ENCODE measurements at regions of chr1 and their contacts with region 1.

Region 1: DNA sequence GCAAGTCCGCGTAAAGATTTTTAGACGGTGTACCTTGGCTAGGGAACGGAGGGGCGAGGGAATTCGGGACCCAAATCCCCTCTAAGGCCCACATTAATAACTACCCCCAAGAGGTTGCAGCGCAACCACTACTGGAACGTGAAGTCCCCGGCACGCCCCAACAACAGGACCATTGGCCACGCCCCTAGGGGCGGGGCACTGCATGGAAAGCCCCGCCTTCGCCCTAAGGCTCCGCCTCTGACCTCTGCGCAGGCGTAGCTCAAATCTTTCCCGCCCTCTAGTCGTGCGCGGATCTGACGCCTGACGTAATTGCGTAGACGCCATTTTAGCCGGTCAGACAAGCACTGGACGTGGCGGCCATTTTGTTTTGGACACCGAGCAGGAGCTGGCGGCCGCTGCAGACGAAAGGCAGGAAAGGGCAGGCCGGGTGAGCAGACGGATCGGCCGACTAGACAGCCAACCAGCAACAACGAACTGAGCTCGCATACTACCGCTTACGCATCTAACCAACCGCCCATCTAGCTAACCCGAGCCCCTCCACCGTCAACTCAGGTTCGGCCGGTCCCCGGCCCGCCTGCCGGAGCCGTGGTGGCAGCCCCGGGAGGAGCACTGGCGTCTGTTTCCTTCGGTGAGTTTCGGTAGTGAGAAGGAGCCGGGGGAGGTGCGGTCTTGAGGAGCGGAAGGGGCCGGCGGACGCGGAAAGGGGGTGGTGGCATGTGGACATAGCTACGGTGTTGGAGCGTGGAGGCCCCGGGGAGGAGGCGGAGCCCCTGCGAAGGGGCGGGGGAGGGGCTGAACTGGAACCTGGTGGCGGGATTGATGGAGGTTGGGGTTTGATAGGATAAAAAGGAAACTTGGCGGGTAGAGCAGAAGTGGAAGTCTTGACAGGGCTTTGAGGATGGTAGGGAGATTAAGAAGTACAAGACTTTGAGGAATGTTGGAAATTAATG is at the start of gene CHTOP:
- DNase-seq: peak; percentile 94 to 98 (median 95)
- ATAC-seq: peak; percentile 94
- H3K4me3 ChIP-seq: peak within 1 kb of the TSS; percentile 89
- H3K27ac ChIP-seq: peak within 1 kb of the TSS; percentile 98
- H3K4me1 ChIP-seq: peaks cover 17 to 20% of the 10 kb centered on the region in 2 experiments
- H3K27me3 ChIP-seq: no peaks in the 10 kb centered on the region
- CTCF ChIP-seq: no peak; a peak in 1 of 6 replicates
- EP300 ChIP-seq: peak; percentile 8; the same call in 1 of the 2 replicates
- POLR2A ChIP-seq: peak; percentile 98
- RAD21 ChIP-seq: no peak
- polyA plus RNA-seq, gene CHTOP: 10.2 to 10.3 TPM

Region 2: GRCh38 chr1:153532769-153533599 is 101.0 kb before region 1 on chr1:
- CTCF ChIA-PET with region 1: no interaction called
- POLR2A ChIA-PET with region 1: no interaction called
- in situ Hi-C with region 1: no loop called
- intact Hi-C with region 1: loop called (anchors 5 kb)
- DNase-seq: peak; percentile 87 to 92 (median 89)
- ATAC-seq: peak; percentile 94
- H3K4me3 ChIP-seq: no peak overlapping the region
- H3K27ac ChIP-seq: peak overlapping the region; percentile 44; the same call in 2 of the 3 replicates
- H3K4me1 ChIP-seq: peaks cover 38 to 45% of the 10 kb centered on the region in 2 experiments
- H3K27me3 ChIP-seq: no peaks in the 10 kb centered on the region
- CTCF ChIP-seq: peak; percentile 92 to 96 (median 94)
- EP300 ChIP-seq: no peak
- POLR2A ChIP-seq: no peak
- RAD21 ChIP-seq: peak; percentile 90 to 91

Region 3: DNA sequence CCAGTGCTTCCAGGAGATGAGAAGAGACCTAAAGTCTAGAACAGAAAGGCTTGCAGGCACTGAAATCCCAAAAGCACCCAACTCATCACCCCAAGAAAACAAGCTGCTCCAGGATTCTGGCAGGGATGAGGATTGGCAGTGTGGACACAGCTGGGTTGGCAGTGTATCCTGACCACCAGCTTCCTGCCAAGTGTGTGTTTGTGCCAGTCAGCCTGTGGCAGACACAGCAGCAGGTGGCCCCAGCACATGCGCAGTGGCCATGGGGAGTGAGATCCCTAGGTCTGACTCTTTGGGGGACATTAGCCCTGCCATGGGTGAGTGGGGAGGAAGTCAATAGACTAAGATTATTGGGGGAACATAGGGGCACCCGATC is 15.9 kb after region 1 on chr1:
- CTCF ChIA-PET with region 1: no interaction called
- POLR2A ChIA-PET with region 1: interaction called, 205 read pairs
- in situ Hi-C with region 1: no loop called
- intact Hi-C with region 1: no loop called
- DNase-seq: no peak
- ATAC-seq: no peak
- H3K4me3 ChIP-seq: no peak overlapping the region
- H3K27ac ChIP-seq: no peak overlapping the region
- H3K4me1 ChIP-seq: peaks cover 14% of the 10 kb centered on the region in 2 experiments
- H3K27me3 ChIP-seq: no peaks in the 10 kb centered on the region
- CTCF ChIP-seq: no peak
- EP300 ChIP-seq: no peak
- POLR2A ChIP-seq: no peak
- RAD21 ChIP-seq: no peak

Region 4: DNA sequence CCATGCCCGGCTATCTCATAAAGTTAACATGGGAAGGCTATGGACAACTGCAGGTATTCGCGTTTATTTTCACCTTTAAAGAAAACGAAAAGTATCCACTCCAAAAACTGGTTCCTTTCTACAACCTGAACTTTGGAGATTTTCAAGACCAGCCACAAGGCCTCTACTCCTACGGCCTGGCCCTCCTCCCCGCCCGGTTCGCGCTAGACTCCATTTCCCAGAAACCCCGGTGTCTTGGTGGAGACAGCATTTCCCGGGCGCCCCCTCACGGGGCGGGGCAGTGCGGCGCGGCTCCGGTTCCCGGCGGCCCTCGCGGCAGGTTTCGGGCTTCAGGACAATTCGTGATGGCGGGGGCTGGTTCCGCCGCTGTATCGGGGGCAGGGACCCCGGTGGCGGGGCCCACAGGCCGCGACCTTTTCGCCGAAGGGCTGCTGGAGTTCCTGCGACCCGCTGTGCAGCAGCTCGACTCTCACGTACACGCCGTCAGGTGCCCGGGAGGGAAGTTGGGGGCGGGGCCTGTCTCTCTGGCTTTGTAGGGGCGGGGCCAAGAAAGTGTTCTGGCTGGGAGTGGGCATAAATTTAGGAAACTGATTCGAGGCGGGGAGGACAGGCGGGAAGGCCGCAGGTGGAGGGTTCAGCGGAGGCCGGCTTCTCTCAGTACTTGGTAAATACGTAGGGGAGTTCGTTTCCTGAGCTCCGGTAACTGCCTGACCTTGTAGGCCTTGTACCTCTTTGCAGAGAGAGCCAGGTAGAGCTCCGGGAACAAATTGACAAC is 24.6 kb after region 1 on chr1 and contains the start of gene SNAPIN:
- CTCF ChIA-PET with region 1: no interaction called
- POLR2A ChIA-PET with region 1: interaction called, 205 read pairs
- in situ Hi-C with region 1: no loop called
- intact Hi-C with region 1: no loop called
- DNase-seq: peak; percentile 87 to 95 (median 90)
- ATAC-seq: peak; percentile 97
- H3K4me3 ChIP-seq: peak within 1 kb of the TSS; percentile 98
- H3K27ac ChIP-seq: peak within 1 kb of the TSS; percentile 86
- H3K4me1 ChIP-seq: peaks cover 3 to 16% of the 10 kb centered on the region in 2 experiments; a peak in 4 of 5 replicates
- H3K27me3 ChIP-seq: no peaks in the 10 kb centered on the region
- CTCF ChIP-seq: 0 out of 6 replicates have a peak, but pooled peaks of 2 of the 3 experiments have one; percentile 14 to 25
- EP300 ChIP-seq: no peak
- POLR2A ChIP-seq: peak; percentile 87
- RAD21 ChIP-seq: 0 out of 4 replicates have a peak, but pooled peaks of 1 of the 2 experiments have one; percentile 6
- polyA plus RNA-seq, gene SNAPIN: 11.2 to 15.8 TPM

Region 5: GRCh38 chr1:153670859-153671627 is 37.1 kb after region 1 on chr1 and contains the start of gene ILF2:
- CTCF ChIA-PET with region 1: no interaction called
- POLR2A ChIA-PET with region 1: interaction called, 11 read pairs
- in situ Hi-C with region 1: no loop called
- intact Hi-C with region 1: loop called (anchors 1 kb)
- DNase-seq: peak; percentile 97 to 100 (median 98)
- ATAC-seq: peak; percentile 95
- H3K4me3 ChIP-seq: peak within 1 kb of the TSS; percentile 94
- H3K27ac ChIP-seq: peak within 1 kb of the TSS; percentile 92
- H3K4me1 ChIP-seq: peaks cover 0 to 4% of the 10 kb centered on the region in 2 experiments; a peak in 3 of 5 replicates
- H3K27me3 ChIP-seq: no peaks in the 10 kb centered on the region
- CTCF ChIP-seq: peak in 2 of 3 experiments; percentile 61 to 63; a peak in 4 of 6 replicates
- EP300 ChIP-seq: peak; percentile 66; the same call in 1 of the 2 replicates
- POLR2A ChIP-seq: peak; percentile 97
- RAD21 ChIP-seq: no peak; a peak in 1 of 4 replicates
- polyA plus RNA-seq, gene ILF2: 459 to 642 TPM

Region 6: DNA sequence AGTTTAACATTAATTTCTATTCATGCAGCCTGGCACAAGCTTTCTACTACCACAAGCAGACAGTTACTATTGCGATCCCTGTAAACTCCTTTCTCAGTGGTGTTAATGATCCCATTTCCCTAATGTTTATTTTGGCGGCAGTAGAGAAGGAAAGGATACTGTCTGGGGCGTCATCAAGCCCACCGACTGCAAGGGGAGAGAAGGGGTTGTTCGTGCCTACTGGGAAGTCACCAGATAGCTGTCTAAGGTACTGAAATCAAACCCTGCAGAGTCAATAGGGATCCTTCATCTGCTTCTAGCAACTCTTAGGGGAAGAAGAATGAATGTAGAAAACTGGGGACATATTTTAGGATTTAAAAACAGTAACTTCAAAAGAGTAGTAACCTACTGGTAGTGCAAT is 1069.2 kb after region 1 on chr1:
- CTCF ChIA-PET with region 1: no interaction called
- POLR2A ChIA-PET with region 1: no interaction called
- in situ Hi-C with region 1: no loop called
- intact Hi-C with region 1: no loop called
- DNase-seq: no peak
- ATAC-seq: no peak
- H3K4me3 ChIP-seq: no peak overlapping the region
- H3K27ac ChIP-seq: no peak overlapping the region
- H3K4me1 ChIP-seq: no peaks in the 10 kb centered on the region
- H3K27me3 ChIP-seq: peaks cover 21 to 23% of the 10 kb centered on the region in 2 experiments
- CTCF ChIP-seq: no peak
- EP300 ChIP-seq: no peak
- POLR2A ChIP-seq: no peak
- RAD21 ChIP-seq: no peak